Gastrocnemius medialis (tissue), 4 donors: ENCODE measurements at regions of chr15 and their contacts with region 1.

Region 1: DNA sequence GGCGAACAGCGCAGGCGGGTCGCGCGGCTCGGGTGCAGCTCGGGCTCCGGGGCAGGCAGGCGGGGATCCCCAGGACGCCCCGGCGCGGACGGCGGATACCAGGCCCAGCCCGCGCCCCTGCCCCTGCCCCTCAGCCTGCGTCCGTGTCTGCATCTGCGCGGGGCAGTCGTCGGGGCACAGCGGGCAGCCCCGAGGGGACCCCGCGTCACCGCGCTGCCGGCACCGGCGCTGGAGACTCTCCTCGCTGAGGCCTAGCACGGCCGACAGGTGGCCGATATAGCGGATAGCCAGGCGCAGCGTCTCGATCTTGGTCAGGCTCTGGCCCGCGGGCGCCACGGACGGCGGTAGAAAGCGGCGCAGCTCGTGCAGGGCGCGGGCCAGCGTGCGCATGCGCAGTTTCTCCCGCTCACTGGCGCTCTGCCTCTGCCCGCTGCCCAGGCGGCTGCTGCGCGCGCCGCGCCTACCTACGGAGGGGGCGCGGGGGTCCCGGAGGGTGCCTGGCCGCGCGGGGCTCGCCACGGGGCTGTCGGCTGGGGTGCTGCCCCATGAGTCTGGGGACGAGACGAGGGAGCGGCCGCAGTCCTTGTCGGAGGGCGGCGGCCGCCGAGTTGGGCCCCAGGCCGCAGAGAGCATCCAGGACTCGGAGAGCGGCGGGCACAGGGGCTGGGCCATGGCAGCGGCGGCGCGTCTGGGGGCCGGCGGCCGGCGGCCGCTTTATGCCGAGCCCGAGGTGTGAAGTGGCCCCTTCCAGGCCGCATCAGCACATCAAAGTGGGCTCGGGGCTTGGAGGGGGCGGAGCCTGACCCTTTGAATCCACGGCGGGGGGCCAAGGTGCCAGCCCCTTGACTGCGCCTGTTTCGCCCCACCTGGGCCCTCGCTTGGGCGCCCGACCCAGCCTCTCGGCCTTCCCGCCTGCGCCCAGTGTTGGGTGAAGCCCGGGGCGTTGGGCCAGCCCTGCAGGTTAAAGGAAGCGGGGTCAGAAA is at the start of gene MESP1:
- DNase-seq: peak; percentile 87 to 90
- ATAC-seq: peak; percentile 95 to 97
- H3K4me3 ChIP-seq: peak within 1 kb of the TSS; percentile 56 to 97 (median 76)
- H3K27ac ChIP-seq: peak within 1 kb of the TSS; percentile 45 to 80 (median 70)
- H3K4me1 ChIP-seq: peaks cover 9 to 11% of the 10 kb centered on the region in 2 donors
- H3K27me3 ChIP-seq: peaks cover 0 to 2% (median 0%) of the 10 kb centered on the region in 3 donors
- CTCF ChIP-seq: peak; percentile 74 to 86 (median 80)
- POLR2A ChIP-seq: peak; percentile 77 to 81
- total RNA-seq, gene MESP1: 5.3 to 12.6 (median 6.1) TPM

Region 2: GRCh38 chr15:89647191-89647851 is 103.5 kb before region 1 on chr15:
- in situ Hi-C with region 1: no loop called
- intact Hi-C with region 1: loop called (anchors 1 kb)
- DNase-seq: peak in 1 of 2 donors; percentile 62
- ATAC-seq: peak; percentile 60 to 83
- H3K4me3 ChIP-seq: no peak overlapping the region
- H3K27ac ChIP-seq: no peak overlapping the region
- H3K4me1 ChIP-seq: peaks cover 0 to 3% of the 10 kb centered on the region in 2 donors
- H3K27me3 ChIP-seq: no peaks in the 10 kb centered on the region
- CTCF ChIP-seq: peak; percentile 63 to 88 (median 77)
- POLR2A ChIP-seq: no peak

Region 3: DNA sequence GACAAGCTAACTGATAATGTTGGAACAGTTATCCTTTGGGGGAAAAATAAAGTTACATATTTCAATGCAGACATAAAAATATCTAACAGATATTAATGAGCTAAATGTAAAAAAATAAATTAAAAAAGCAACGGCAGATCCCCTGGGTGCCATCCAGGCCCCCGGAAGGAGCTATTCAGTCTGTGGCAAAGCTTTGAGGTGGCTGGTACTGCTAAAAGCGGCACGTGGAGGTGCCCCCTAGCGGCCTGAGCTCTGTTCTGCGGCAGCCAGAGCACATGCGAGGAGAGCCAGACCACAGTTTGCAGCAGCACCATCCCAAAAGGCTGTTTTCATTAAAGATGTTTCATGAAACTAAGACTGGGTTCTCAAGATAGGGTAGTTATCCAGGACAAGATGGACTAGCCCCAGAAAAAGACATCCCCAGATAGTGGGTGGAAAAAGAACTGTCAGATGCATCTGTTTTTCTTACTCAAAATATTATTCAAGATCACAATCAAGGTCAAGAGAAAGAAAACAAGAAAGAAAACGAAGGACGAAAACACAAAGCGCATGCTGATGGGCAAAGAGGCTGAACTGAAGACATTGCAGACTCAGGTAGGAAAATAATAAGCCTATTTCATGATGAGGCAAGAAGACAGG is 124.2 kb after region 1 on chr15:
- in situ Hi-C with region 1: loop called in 1 of 4 experiments (anchors 5 kb)
- intact Hi-C with region 1: no loop called
- DNase-seq: peak; percentile 56 to 75
- ATAC-seq: peak; percentile 79 to 92
- H3K4me3 ChIP-seq: no peak overlapping the region
- H3K27ac ChIP-seq: no peak overlapping the region
- H3K4me1 ChIP-seq: peaks cover 3 to 6% of the 10 kb centered on the region in 2 donors
- H3K27me3 ChIP-seq: no peaks in the 10 kb centered on the region
- CTCF ChIP-seq: peak; percentile 85 to 93 (median 88)
- POLR2A ChIP-seq: no peak

Region 4: GRCh38 chr15:90086868-90087268 is 336.0 kb after region 1 on chr15:
- in situ Hi-C with region 1: loop called in 3 of 4 experiments (anchors 25 kb)
- intact Hi-C with region 1: no loop called
- DNase-seq: no peak
- ATAC-seq: peak in 1 of 2 donors; percentile 57
- H3K4me3 ChIP-seq: no peak overlapping the region
- H3K27ac ChIP-seq: peak overlapping the region; percentile 11 to 56 (median 32)
- H3K4me1 ChIP-seq: peaks cover 0 to 5% of the 10 kb centered on the region in 2 donors
- H3K27me3 ChIP-seq: no peaks in the 10 kb centered on the region
- CTCF ChIP-seq: peak; percentile 55 to 70 (median 58)
- POLR2A ChIP-seq: no peak